Transverse colon (tissue), 4 donors: ENCODE measurements at regions of chr16 and their contacts with region 1.

Region 1: GRCh38 chr16:86509759-86510464 is 415 bp upstream of the FOXF1 start:
- DNase-seq: peak; percentile 73
- H3K4me3 ChIP-seq: peak overlapping the region; percentile 50 to 84 (median 65)
- H3K27ac ChIP-seq: peak overlapping the region; percentile 94 to 99 (median 96)
- H3K4me1 ChIP-seq: peaks cover 0 to 20% (median 4%) of the 10 kb centered on the region in 4 donors
- H3K27me3 ChIP-seq: peaks cover 98% of the 10 kb centered on the region
- CTCF ChIP-seq: no peak
- EP300 ChIP-seq: no peak
- POLR2A ChIP-seq: peak; percentile 22

Region 2: DNA sequence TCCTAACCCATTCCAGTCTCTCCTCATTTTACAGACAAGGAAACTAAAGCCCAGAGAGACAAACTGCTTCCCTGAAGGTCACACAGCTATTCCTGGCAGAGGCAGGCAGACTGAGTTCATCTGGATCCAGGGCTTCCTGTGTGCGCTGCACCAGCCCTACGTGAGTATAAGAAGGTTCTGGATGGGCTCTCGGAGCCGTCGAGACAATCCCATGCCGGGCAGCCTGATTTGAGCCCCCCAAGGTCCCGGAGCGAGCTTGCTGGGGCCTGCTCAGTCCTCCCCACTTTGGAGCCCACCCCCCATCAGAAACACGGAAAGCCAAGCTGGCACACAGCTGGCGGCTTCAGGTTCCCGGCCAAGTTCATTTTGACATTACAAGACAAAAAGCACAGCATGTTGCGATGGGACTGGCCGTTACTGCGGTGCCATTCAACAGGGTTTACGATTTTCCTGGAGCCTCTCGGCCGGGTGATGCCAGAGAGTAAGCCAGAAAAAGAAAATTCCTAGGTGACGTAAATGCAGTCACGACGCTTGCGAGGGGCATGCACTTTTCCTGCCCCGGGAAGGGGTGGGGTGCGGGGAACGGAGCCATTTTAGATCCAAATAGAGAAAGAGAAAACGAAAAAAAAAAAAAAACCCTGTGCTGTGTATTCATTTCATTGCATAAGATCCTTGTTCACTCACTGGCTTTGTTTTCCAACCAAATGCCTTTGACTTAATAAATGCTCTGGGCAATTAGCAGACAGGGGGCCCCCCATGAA is 166.7 kb before region 1 on chr16:
- in situ Hi-C with region 1: loop called in 3 of 4 experiments (anchors 5 to 25 kb)
- intact Hi-C with region 1: loop called (anchors 5 kb)
- DNase-seq: peak; percentile 68
- H3K4me3 ChIP-seq: no peak overlapping the region
- H3K27ac ChIP-seq: peak overlapping the region; percentile 83 to 93 (median 90)
- H3K4me1 ChIP-seq: peaks cover 7 to 21% (median 16%) of the 10 kb centered on the region in 4 donors
- H3K27me3 ChIP-seq: peaks cover 10% of the 10 kb centered on the region
- CTCF ChIP-seq: no peak
- EP300 ChIP-seq: peak; percentile 98
- POLR2A ChIP-seq: no peak

Region 3: GRCh38 chr16:86363057-86363490 is 146.8 kb before region 1 on chr16:
- in situ Hi-C with region 1: no loop called
- intact Hi-C with region 1: loop called (anchors 5 kb)
- DNase-seq: peak; percentile 23
- H3K4me3 ChIP-seq: no peak overlapping the region
- H3K27ac ChIP-seq: peak overlapping the region; percentile 70 to 84 (median 78)
- H3K4me1 ChIP-seq: peaks cover 4 to 21% (median 10%) of the 10 kb centered on the region in 4 donors
- H3K27me3 ChIP-seq: peaks cover 27% of the 10 kb centered on the region
- CTCF ChIP-seq: no peak
- EP300 ChIP-seq: peak; percentile 93
- POLR2A ChIP-seq: no peak

Region 4: GRCh38 chr16:86462334-86463084 is 47.4 kb before region 1 on chr16:
- in situ Hi-C with region 1: no loop called
- intact Hi-C with region 1: loop called (anchors 5 kb)
- DNase-seq: peak; percentile 56
- H3K4me3 ChIP-seq: no peak overlapping the region
- H3K27ac ChIP-seq: peak overlapping the region; percentile 73 to 84 (median 80)
- H3K4me1 ChIP-seq: peaks cover 5 to 14% (median 9%) of the 10 kb centered on the region in 4 donors
- H3K27me3 ChIP-seq: no peaks in the 10 kb centered on the region
- CTCF ChIP-seq: peak in 2 of 5 experiments; percentile 21 to 45
- EP300 ChIP-seq: peak; percentile 74
- POLR2A ChIP-seq: no peak

Region 5: GRCh38 chr16:86520317-86521210 is 10.7 kb after region 1 on chr16:
- in situ Hi-C with region 1: no loop called
- intact Hi-C with region 1: no loop called
- DNase-seq: no peak
- H3K4me3 ChIP-seq: peak overlapping the region in 1 of 4 donors; percentile 3
- H3K27ac ChIP-seq: peak overlapping the region in 3 of 4 donors; percentile 94 to 97 (median 95)
- H3K4me1 ChIP-seq: peaks cover 6 to 22% (median 9%) of the 10 kb centered on the region in 4 donors
- H3K27me3 ChIP-seq: peaks cover 28% of the 10 kb centered on the region
- CTCF ChIP-seq: peak in 2 of 5 experiments; percentile 1 to 4
- EP300 ChIP-seq: no peak
- POLR2A ChIP-seq: no peak